Left cardiac atrium (tissue), 4 donors: ENCODE measurements at regions of chr3 and their contacts with region 1.

Region 1: DNA sequence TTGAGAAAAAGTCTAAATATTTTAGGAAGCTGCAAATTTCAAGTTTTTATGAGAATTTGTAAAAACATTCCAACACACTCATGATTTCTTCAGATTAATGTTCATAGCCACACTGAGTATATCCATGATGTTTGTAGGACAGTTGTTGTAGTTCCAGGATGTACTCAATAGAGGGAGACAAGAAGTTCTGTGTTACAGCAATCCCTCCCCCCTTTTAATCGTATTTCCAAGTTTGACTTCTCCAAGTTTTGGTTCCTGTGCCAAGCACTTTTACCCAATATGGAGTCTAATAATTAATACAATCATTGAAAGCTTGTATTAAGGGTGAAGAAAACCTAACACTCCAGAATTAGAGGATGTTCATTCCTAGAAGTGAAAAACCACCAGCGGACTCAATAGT is 143.4 kb downstream of the FEZF2 start:
- DNase-seq: no peak
- ATAC-seq: no peak

Region 2: DNA sequence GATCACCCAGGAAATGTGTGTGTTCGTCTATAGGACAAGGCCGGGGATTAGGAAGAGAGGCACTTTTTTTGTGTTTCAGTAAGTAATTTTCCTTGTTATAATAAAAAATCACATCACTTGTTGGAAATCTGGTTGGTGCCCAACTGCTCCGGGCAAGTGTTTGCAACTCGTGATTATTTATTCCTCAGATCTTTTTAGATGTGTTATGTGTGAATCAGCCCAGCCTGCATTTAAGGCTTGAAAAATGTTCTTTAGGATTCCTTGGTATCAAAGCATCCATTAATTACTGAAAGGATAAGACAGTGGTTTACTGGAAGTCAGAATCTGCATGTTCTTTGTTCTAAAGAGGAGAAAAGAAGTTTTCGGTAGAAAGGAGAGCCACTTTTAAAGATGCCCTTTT is 202.1 kb before region 1 on chr3:
- intact Hi-C with region 1: no loop called
- DNase-seq: no peak
- ATAC-seq: no peak

Region 3: GRCh38 chr3:62293051-62293780 is 63.3 kb after region 1 on chr3:
- intact Hi-C with region 1: loop called in 1 of 2 experiments (anchors 10 kb)
- DNase-seq: no peak
- ATAC-seq: no peak